Calu3 (cell line): ENCODE measurements at regions of chr3 and their contacts with region 1.

Region 1: GRCh38 chr3:142929109-142929508 is 34.4 kb downstream of the PAQR9 start:
- DNase-seq: peak; percentile 90
- H3K4me3 Mint-ChIP-seq: no peak overlapping the region
- H3K27ac Mint-ChIP-seq: no peak overlapping the region
- H3K4me1 Mint-ChIP-seq: no peaks in the 10 kb centered on the region
- H3K27me3 Mint-ChIP-seq: no peaks in the 10 kb centered on the region
- CTCF ChIP-seq: peak; percentile 87

Region 2: GRCh38 chr3:142857056-142857455 is 72.1 kb before region 1 on chr3:
- CTCF ChIA-PET with region 1: no interaction called
- intact Hi-C with region 1: no loop called
- DNase-seq: peak; percentile 77
- H3K4me3 Mint-ChIP-seq: no peak overlapping the region
- H3K27ac Mint-ChIP-seq: no peak overlapping the region
- H3K4me1 Mint-ChIP-seq: peaks cover 25% of the 10 kb centered on the region
- H3K27me3 Mint-ChIP-seq: peaks cover 7% of the 10 kb centered on the region
- CTCF ChIP-seq: peak; percentile 61

Region 3: DNA sequence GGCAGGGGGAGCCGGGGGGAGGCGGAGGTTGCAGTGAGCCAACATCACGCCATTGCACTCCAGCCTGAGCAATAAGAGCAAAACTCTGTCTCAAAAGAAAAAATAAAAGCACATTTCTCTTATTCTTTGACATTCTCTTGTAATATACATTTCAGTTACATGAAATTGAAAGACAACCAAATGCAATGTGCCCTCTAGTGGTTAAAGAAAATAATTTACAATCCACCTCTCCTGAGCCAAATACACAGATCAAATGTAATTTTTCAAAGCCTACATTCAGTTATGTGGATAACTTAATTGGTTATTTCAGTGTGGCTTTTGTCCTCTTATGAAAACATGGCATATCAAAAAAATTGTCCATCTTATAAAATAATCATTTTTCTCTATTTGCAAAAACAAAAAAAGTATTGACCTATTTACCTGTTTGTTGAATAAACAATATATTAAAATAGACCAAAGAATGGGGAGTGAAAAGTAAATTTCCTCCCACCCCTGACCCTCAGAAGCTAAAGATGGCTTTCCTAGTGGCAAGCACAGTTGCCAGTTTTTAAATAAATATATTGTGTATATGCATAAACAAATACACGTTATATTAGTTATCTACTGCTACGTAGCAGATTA is 58.1 kb after region 1 on chr3:
- CTCF ChIA-PET with region 1: no interaction called
- intact Hi-C with region 1: loop called (anchors 1 kb)
- DNase-seq: no peak
- H3K4me3 Mint-ChIP-seq: no peak overlapping the region
- H3K27ac Mint-ChIP-seq: no peak overlapping the region
- H3K4me1 Mint-ChIP-seq: no peaks in the 10 kb centered on the region
- H3K27me3 Mint-ChIP-seq: peaks cover 15% of the 10 kb centered on the region
- CTCF ChIP-seq: peak; percentile 84

Region 4: GRCh38 chr3:142993958-142994442 is 64.9 kb after region 1 on chr3:
- CTCF ChIA-PET with region 1: no interaction called
- intact Hi-C with region 1: loop called (anchors 1 kb)
- DNase-seq: peak; percentile 83
- H3K4me3 Mint-ChIP-seq: no peak overlapping the region
- H3K27ac Mint-ChIP-seq: no peak overlapping the region
- H3K4me1 Mint-ChIP-seq: peaks cover 47% of the 10 kb centered on the region
- H3K27me3 Mint-ChIP-seq: no peaks in the 10 kb centered on the region
- CTCF ChIP-seq: peak; percentile 82

Region 5: DNA sequence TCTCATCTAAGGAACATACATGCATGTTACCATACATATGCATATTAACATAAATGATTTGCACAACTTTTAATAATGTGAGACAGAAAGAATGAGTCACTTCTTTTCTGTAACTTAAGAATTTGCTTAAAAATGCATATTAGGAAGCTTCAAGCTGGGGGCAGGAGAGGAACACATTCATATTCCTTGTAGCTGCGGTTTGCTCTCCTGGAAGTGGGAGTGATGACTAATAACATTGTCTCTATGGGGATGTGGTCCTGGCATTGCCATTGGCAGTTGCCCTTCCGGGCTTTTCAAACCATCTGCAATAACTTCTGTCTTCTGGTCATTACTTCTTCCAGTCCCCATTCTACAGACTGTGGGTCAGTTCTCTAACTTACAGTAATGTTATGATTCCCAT is 206.0 kb after region 1 on chr3:
- CTCF ChIA-PET with region 1: no interaction called
- intact Hi-C with region 1: no loop called
- DNase-seq: peak; percentile 59
- H3K4me3 Mint-ChIP-seq: no peak overlapping the region
- H3K27ac Mint-ChIP-seq: no peak overlapping the region
- H3K4me1 Mint-ChIP-seq: peaks cover 28% of the 10 kb centered on the region
- H3K27me3 Mint-ChIP-seq: peaks cover 60% of the 10 kb centered on the region
- CTCF ChIP-seq: no peak